Heart right ventricle (tissue), 16 donors: ENCODE measurements at regions of chr11 and their contacts with region 1.

Region 1: DNA sequence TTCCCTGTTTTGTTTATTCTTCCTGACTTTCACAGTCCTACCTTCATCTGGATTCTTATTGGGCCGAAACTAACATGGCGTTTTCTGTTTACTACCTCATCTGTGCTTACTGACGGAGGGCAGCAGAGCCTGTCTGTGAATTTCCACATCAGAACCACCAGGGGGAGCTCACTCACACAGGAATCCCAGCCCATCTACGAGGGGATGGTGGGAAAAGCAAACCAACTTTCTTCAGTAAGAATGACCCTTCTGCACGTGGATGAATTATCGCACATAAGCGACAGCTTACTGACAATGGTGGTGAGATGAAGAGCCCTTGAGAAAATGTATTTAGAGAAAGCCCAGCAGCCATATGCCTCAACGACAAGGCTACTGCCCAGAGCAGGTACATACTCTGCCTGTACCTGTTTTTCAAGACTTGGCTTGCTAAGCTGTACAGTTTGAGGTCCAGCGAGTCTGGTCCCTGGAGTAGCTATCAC is 42.5 kb downstream of the LARGE2 start:
- DNase-seq: peak; percentile 17 to 67
- ATAC-seq: peak; percentile 63 to 91 (median 85)
- H3K4me3 ChIP-seq: no peak overlapping the region
- H3K27ac ChIP-seq: peak overlapping the region in 2 of 10 donors; percentile 18 to 19
- H3K4me1 ChIP-seq: peaks cover 0 to 26% (median 8%) of the 10 kb centered on the region in 9 donors
- H3K27me3 ChIP-seq: no peaks in the 10 kb centered on the region
- CTCF ChIP-seq: peak; percentile 78 to 96 (median 89)

Region 2: DNA sequence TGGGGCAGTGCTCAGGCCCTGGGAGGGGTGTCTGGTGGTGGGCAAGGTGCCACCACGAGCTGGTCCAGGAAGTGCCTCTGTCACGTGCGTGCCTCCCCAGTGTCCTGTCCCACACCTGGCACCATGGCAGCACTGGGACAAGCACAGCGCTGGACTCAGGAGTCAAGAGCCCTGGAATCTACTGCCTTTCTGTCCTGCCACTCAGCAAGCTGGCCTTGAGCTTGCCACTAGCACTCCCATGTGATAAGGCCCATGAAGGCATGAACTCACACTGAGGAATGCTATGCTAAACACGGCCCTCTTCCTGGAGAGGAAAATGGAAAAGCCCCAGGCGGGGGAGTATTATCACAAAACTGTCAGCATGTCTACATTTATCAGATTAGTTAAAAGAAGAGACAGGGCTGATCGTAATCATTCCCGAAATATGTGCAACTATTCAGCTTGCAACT is 210.7 kb before region 1 on chr11:
- intact Hi-C with region 1: no loop called
- DNase-seq: peak; percentile 59 to 63
- ATAC-seq: peak; percentile 81 to 96 (median 90)
- H3K4me3 ChIP-seq: no peak overlapping the region
- H3K27ac ChIP-seq: peak overlapping the region in 9 of 10 donors; percentile 18 to 67 (median 53)
- H3K4me1 ChIP-seq: peaks cover 2 to 27% (median 22%) of the 10 kb centered on the region in 9 donors
- H3K27me3 ChIP-seq: no peaks in the 10 kb centered on the region
- CTCF ChIP-seq: peak in 1 of 9 donors; percentile 8

Region 3: DNA sequence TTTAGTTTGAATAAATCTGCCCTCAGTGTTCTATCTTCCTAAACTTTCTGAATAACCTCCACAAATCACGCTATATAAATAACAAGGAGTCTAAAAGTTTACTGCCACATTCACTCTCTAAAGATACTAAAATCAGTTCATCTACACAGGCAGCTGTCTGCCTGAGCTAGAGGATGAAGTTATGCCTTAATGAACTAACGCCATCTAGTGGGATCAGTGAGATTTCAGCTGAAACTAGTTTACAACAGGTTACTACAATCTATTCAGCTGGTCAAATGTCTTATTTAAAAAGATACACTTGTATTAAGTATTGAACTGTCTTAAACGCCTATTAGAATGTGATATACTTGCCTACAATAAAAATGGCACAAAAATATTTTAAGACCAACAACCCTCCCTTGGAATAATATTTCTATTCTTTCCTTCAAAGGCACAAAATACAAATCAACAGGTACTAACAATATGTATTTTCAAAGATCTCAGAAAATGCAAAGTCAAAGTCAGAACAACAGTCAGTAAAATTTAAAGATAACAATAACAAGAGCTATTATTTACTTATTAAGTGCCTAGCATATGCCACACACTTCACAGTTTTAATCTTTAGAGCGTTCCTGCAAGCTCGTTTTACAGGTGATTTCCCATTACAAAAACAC is 41.6 kb after region 1 on chr11:
- intact Hi-C with region 1: loop called (anchors 1 to 10 kb)
- DNase-seq: peak in 1 of 2 donors; percentile 47
- ATAC-seq: peak in 6 of 8 donors; percentile 54 to 83 (median 78)
- H3K4me3 ChIP-seq: no peak overlapping the region
- H3K27ac ChIP-seq: no peak overlapping the region
- H3K4me1 ChIP-seq: peaks cover 0 to 42% (median 23%) of the 10 kb centered on the region in 9 donors
- H3K27me3 ChIP-seq: no peaks in the 10 kb centered on the region
- CTCF ChIP-seq: peak; percentile 60 to 88 (median 79)

Region 4: GRCh38 chr11:46308631-46309419 is 343.9 kb after region 1 on chr11:
- intact Hi-C with region 1: loop called in 2 of 10 experiments (anchors 5 to 10 kb)
- DNase-seq: peak; percentile 80 to 82
- ATAC-seq: peak; percentile 73 to 91 (median 85)
- H3K4me3 ChIP-seq: no peak overlapping the region
- H3K27ac ChIP-seq: no peak overlapping the region
- H3K4me1 ChIP-seq: peaks cover 0 to 9% (median 6%) of the 10 kb centered on the region in 9 donors
- H3K27me3 ChIP-seq: no peaks in the 10 kb centered on the region
- CTCF ChIP-seq: peak; percentile 78 to 95 (median 90)

Region 5: GRCh38 chr11:46315033-46315738 is 350.2 kb after region 1 on chr11:
- intact Hi-C with region 1: loop called in 2 of 10 experiments (anchors 5 to 10 kb)
- DNase-seq: peak; percentile 57 to 73
- ATAC-seq: peak; percentile 21 to 62 (median 50)
- H3K4me3 ChIP-seq: no peak overlapping the region
- H3K27ac ChIP-seq: peak overlapping the region in 8 of 10 donors; percentile 46 to 88 (median 68)
- H3K4me1 ChIP-seq: peaks cover 0 to 41% (median 26%) of the 10 kb centered on the region in 9 donors
- H3K27me3 ChIP-seq: no peaks in the 10 kb centered on the region
- CTCF ChIP-seq: peak; percentile 77 to 91 (median 82)